ENCODE measurements at regions of chr6 and their contacts with region 1.

Region 1: GRCh38 chr6:71288228-71289001 is at the start of gene OGFRL1:
- DNase-seq: peak; percentile 56
- H3K4me3 ChIP-seq: peak within 1 kb of the TSS; percentile 71 to 79 (median 75)
- H3K27ac ChIP-seq: peak within 1 kb of the TSS; percentile 60
- H3K4me1 ChIP-seq: peaks cover 28% of the 10 kb centered on the region
- H3K27me3 ChIP-seq: no peaks in the 10 kb centered on the region
- CTCF ChIP-seq: peak in 1 of 2 donors; percentile 5
- POLR2A ChIP-seq: peak; percentile 89
- total RNA-seq, gene OGFRL1: 19.4 and 21.1 TPM in 2 replicates

Region 2: GRCh38 chr6:70998148-70998547 is 290.3 kb before region 1 on chr6:
- CTCF ChIA-PET with region 1: no interaction called
- POLR2A ChIA-PET with region 1: no interaction called
- dilution Hi-C with region 1: no loop called
- intact Hi-C with region 1: no loop called
- DNase-seq: no peak
- H3K4me3 ChIP-seq: no peak overlapping the region
- H3K27ac ChIP-seq: no peak overlapping the region
- H3K4me1 ChIP-seq: no peaks in the 10 kb centered on the region
- H3K27me3 ChIP-seq: no peaks in the 10 kb centered on the region
- CTCF ChIP-seq: no peak
- POLR2A ChIP-seq: no peak

Region 3: GRCh38 chr6:71248306-71248765 is 40.1 kb before region 1 on chr6:
- CTCF ChIA-PET with region 1: interaction called, 16 read pairs
- POLR2A ChIA-PET with region 1: interaction called, 14 read pairs
- dilution Hi-C with region 1: no loop called
- intact Hi-C with region 1: loop called (anchors 1 kb)
- DNase-seq: peak; percentile 56
- H3K4me3 ChIP-seq: no peak overlapping the region
- H3K27ac ChIP-seq: peak overlapping the region; percentile 73
- H3K4me1 ChIP-seq: peaks cover 53% of the 10 kb centered on the region
- H3K27me3 ChIP-seq: no peaks in the 10 kb centered on the region
- CTCF ChIP-seq: no peak
- POLR2A ChIP-seq: no peak

Region 4: DNA sequence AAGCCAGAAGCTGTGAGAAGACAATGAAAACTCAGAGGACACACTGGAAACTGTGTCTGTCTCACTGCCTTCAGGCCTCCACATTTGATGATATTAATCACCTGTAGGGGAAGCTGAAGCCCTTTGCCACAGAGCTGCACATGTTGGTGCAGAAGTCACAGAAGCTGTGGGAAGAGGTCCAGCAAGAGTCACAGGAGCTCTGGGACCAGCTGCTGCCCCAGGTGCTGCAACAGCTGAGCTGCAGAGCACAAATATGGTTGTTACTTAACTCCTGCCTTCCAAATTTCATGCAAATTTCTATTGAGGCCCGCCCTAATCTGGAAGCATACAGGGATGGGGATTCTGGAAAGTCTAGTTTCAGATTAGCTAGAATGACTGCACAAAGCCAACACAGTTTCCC is 169.5 kb after region 1 on chr6:
- CTCF ChIA-PET with region 1: no interaction called
- POLR2A ChIA-PET with region 1: no interaction called
- dilution Hi-C with region 1: no loop called
- intact Hi-C with region 1: no loop called
- DNase-seq: no peak
- H3K4me3 ChIP-seq: no peak overlapping the region
- H3K27ac ChIP-seq: no peak overlapping the region
- H3K4me1 ChIP-seq: no peaks in the 10 kb centered on the region
- H3K27me3 ChIP-seq: no peaks in the 10 kb centered on the region
- CTCF ChIP-seq: no peak
- POLR2A ChIP-seq: no peak